IMR-90 (cell line): ENCODE measurements at regions of chr10 and their contacts with region 1.

Region 1: GRCh38 chr10:30134171-30134945 is 75.0 kb upstream of the JCAD start:
- DNase-seq: no peak
- ATAC-seq: no peak
- H3K4me3 ChIP-seq: no peak overlapping the region
- H3K27ac ChIP-seq: no peak overlapping the region
- H3K4me1 ChIP-seq: no peaks in the 10 kb centered on the region
- H3K27me3 ChIP-seq: peaks cover 16% of the 10 kb centered on the region
- CTCF ChIP-seq: no peak
- POLR2A ChIP-seq: no peak
- RAD21 ChIP-seq: no peak

Region 2: GRCh38 chr10:30116041-30116491 is 18.3 kb before region 1 on chr10:
- CTCF ChIA-PET with region 1: interaction called, 10 read pairs
- POLR2A ChIA-PET with region 1: no interaction called
- dilution Hi-C with region 1: no loop called
- in situ Hi-C with region 1: no loop called
- intact Hi-C with region 1: no loop called
- DNase-seq: no peak
- ATAC-seq: no peak
- H3K4me3 ChIP-seq: no peak overlapping the region
- H3K27ac ChIP-seq: no peak overlapping the region
- H3K4me1 ChIP-seq: no peaks in the 10 kb centered on the region; the same call in 1 of the 2 replicates
- H3K27me3 ChIP-seq: peaks cover 7% of the 10 kb centered on the region
- CTCF ChIP-seq: no peak
- POLR2A ChIP-seq: no peak
- RAD21 ChIP-seq: no peak